PC-3 (cell line): ENCODE measurements at regions of chr9 and their contacts with region 1.

Region 1: GRCh38 chr9:36517131-36517530 is 55.6 kb upstream of the MELK start:
- DNase-seq: no peak
- ATAC-seq: no peak
- H3K4me3 ChIP-seq: no peak overlapping the region
- H3K27ac ChIP-seq: no peak overlapping the region
- H3K4me1 ChIP-seq: no peaks in the 10 kb centered on the region
- H3K27me3 ChIP-seq: no peaks in the 10 kb centered on the region
- CTCF ChIP-seq: no peak

Region 2: GRCh38 chr9:36148311-36149051 is 368.6 kb before region 1 on chr9:
- CTCF ChIA-PET with region 1: no interaction called
- POLR2A ChIA-PET with region 1: no interaction called
- intact Hi-C with region 1: no loop called
- DNase-seq: peak; percentile 92
- ATAC-seq: peak; percentile 81
- H3K4me3 ChIP-seq: no peak overlapping the region
- H3K27ac ChIP-seq: peak overlapping the region; percentile 44
- H3K4me1 ChIP-seq: peaks cover 18% of the 10 kb centered on the region
- H3K27me3 ChIP-seq: no peaks in the 10 kb centered on the region
- CTCF ChIP-seq: no peak

Region 3: GRCh38 chr9:36479101-36479500 is 38.0 kb before region 1 on chr9:
- CTCF ChIA-PET with region 1: no interaction called
- POLR2A ChIA-PET with region 1: interaction called, 10 read pairs
- intact Hi-C with region 1: no loop called
- DNase-seq: no peak
- ATAC-seq: no peak
- H3K4me3 ChIP-seq: no peak overlapping the region
- H3K27ac ChIP-seq: no peak overlapping the region
- H3K4me1 ChIP-seq: no peaks in the 10 kb centered on the region
- H3K27me3 ChIP-seq: no peaks in the 10 kb centered on the region
- CTCF ChIP-seq: no peak

Region 4: DNA sequence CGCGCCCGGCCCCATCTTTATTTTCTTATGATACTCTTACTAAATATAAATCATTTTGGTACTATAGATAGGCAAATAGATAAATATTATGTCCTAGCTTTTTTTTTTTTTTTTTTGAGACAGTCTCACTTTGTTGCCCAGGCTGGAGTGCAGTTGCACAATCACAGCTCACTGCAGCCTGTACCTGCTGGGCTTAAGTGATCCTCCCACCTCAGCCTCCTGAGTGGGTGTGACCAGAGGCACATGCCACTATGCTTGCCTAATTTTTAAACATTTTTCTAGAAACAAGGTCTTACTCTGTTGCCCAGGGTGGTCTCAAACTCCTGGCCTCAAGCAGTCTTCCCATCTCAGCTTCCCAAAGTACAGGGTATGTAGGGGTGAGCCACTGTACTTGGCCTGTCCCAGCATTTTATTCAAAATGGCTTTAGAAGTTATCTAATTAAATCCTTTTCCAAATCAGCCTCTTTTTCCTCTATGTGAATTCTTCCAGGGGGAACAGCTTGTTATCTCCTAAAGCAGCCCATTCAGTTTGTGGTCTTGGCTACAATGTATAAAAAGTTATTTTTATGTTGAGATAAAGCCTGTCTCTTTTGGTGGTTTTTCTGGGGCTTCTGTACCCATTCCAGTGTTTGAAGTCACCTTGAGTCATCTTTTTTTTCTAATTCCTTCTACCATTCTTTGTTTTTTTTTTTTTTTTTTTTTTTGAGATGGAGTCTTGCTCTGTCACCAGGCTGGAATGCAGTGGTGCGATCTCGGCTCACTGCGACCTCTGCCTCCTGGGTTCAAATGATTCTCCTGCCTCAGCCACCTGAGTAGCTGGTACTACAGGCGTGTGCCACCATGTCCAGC is 67.7 kb after region 1 on chr9:
- CTCF ChIA-PET with region 1: no interaction called
- POLR2A ChIA-PET with region 1: no interaction called
- intact Hi-C with region 1: no loop called
- DNase-seq: peak; percentile 56
- ATAC-seq: peak; percentile 50
- H3K4me3 ChIP-seq: peak overlapping the region; percentile 24; the same call in 1 of the 2 replicates
- H3K27ac ChIP-seq: peak overlapping the region; percentile 60
- H3K4me1 ChIP-seq: peaks cover 7% of the 10 kb centered on the region
- H3K27me3 ChIP-seq: no peaks in the 10 kb centered on the region
- CTCF ChIP-seq: no peak